Calu3 (cell line): ENCODE measurements at regions of chr22 and their contacts with region 1.

Region 1: DNA sequence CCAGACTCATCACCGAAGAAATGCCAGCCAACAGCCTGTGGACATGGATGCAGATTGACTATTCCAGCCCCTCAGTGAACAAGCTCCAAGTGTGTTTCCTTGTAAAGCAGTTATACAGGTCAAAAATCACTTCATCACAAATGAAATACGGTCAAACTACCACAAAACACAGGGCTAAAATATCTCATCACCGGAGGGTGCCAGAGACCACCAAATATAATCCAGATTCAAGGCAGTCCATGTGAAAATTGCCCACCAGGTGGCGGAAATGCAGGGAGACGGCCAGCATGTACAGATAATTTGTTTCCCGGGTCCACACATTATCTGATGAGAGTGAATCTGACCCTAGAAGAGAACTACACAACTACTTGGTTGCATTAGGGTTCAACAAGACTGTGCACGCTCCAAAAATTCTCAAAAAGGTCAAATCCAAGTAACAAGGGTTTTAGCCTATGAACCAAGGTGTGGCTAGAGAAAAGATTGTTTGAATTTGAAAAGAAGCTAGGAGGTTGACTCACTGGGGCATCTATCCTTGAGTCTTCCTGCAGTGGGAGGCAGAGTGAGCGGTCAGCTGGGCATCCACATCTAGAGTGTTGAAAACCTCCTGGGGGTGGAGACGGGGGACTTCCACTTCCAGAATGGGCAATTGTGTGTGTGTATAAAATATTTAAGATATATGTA is 71.7 kb downstream of the IGLL5 start:
- DNase-seq: peak; percentile 83
- H3K4me3 Mint-ChIP-seq: no peak overlapping the region
- H3K27ac Mint-ChIP-seq: no peak overlapping the region
- H3K4me1 Mint-ChIP-seq: peaks cover 6% of the 10 kb centered on the region
- H3K27me3 Mint-ChIP-seq: peaks cover 57% of the 10 kb centered on the region
- CTCF ChIP-seq: peak; percentile 78

Region 2: DNA sequence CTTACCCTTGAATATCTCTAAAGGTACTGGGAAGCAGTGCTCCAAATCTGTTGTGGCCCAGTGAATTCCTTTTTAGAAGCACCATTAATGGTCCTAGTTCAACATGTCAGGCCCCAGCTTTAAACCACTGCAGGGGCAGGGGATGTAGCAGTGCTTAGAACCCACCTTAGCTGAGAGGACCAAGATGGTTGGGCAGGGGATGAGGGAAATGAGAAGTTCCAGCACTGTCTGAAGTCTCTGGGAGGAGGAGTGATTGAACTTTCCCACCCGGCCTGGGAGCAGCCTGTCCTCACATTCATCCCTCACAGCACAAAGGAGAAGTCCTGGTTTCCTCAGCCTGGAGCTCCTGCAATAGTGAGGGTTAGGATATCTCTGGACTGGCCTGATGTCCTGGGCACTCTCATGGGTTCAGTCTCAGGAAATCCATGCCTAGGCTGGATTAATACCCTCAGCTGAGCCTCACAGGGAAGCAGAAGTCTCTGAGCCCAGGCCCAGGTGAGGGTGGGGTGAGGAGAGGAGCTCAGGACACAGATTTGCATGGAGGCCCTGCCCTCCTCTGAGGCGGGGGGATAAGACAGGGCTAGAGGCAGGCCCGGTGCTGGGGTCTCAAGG is 371.6 kb before region 1 on chr22:
- CTCF ChIA-PET with region 1: no interaction called
- intact Hi-C with region 1: loop called (anchors 5 kb)
- DNase-seq: no peak
- H3K4me3 Mint-ChIP-seq: no peak overlapping the region
- H3K27ac Mint-ChIP-seq: no peak overlapping the region
- H3K4me1 Mint-ChIP-seq: no peaks in the 10 kb centered on the region
- H3K27me3 Mint-ChIP-seq: peaks cover 88% of the 10 kb centered on the region
- CTCF ChIP-seq: no peak

Region 3: DNA sequence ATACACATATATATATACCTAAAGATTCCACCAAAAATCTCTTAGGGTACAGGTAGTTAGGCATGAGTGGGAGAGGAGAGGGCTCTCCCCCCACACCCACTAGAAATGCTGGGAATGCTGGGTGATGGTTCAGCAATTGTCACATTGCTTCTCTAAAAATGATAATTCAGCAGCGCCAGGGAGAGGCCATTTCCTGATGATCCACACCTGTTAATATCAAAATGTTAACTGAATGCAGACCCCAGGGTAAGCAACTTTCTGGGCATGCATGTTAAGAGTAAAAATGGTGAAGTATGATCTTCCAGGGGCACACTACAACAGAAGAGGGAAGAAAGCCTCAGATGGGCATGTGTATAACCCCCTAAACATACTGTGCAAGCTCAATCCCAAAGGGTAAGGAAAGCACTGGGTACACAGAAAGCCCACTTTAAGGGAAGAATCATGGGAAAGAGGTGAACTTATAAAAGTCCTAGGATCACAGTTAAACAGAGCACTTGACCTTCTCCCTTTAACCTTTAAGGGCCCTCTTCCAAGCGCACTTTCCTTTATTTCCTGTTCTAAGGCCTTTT is 43.4 kb after region 1 on chr22:
- CTCF ChIA-PET with region 1: no interaction called
- intact Hi-C with region 1: no loop called
- DNase-seq: no peak
- H3K4me3 Mint-ChIP-seq: no peak overlapping the region
- H3K27ac Mint-ChIP-seq: no peak overlapping the region
- H3K4me1 Mint-ChIP-seq: peaks cover 9% of the 10 kb centered on the region
- H3K27me3 Mint-ChIP-seq: peaks cover 22% of the 10 kb centered on the region
- CTCF ChIP-seq: no peak

Region 4: DNA sequence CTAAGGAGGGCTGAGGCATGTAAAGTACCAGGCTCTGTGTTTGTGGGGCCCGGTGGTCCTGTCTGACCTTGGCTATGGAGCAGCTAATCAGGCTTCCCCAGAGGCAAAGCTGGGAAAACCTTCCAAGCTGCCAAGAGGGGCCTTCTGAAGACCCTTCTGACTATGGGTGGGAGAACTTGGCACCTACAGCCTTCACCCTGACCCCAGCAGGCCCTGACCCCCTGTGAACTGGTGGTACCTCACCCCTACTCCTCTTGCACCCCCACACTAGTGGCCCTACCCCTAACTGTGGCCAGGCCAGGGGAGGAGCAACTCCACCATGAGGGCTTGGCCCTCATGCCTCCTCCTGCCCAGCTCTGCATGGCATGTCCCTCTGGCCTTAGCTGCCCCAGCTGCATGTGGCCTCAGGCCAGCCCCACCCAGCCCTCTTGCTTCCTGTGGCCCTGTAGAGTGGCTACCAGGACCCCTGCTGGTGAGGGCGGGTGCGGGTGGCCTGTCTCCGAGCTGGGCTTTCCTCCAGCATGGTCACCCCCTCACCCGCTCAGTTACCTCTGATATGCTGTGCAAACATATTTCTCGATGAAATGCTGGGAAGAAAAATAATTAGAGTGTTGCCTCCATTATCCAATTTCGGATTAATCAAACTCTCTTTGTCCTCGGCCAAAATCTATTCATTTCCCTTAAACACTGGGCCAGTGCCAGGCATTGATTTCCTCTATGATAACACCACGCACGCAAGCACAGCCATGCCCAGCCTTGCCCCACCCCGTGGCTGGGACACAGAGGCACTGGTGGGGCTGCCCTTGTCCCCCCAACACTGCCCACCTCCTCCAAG is 118.6 kb after region 1 on chr22:
- CTCF ChIA-PET with region 1: interaction called, 14 read pairs
- intact Hi-C with region 1: no loop called
- DNase-seq: peak; percentile 81
- H3K4me3 Mint-ChIP-seq: peak overlapping the region; percentile 47
- H3K27ac Mint-ChIP-seq: peak overlapping the region; percentile 34
- H3K4me1 Mint-ChIP-seq: peaks cover 51% of the 10 kb centered on the region
- H3K27me3 Mint-ChIP-seq: no peaks in the 10 kb centered on the region
- CTCF ChIP-seq: peak; percentile 38

Region 5: GRCh38 chr22:23128269-23129108 is 169.2 kb after region 1 on chr22:
- CTCF ChIA-PET with region 1: interaction called, 82 read pairs
- intact Hi-C with region 1: loop called (anchors 1 kb)
- DNase-seq: peak; percentile 89
- H3K4me3 Mint-ChIP-seq: no peak overlapping the region
- H3K27ac Mint-ChIP-seq: no peak overlapping the region
- H3K4me1 Mint-ChIP-seq: no peaks in the 10 kb centered on the region
- H3K27me3 Mint-ChIP-seq: peaks cover 14% of the 10 kb centered on the region
- CTCF ChIP-seq: peak; percentile 75

Region 6: DNA sequence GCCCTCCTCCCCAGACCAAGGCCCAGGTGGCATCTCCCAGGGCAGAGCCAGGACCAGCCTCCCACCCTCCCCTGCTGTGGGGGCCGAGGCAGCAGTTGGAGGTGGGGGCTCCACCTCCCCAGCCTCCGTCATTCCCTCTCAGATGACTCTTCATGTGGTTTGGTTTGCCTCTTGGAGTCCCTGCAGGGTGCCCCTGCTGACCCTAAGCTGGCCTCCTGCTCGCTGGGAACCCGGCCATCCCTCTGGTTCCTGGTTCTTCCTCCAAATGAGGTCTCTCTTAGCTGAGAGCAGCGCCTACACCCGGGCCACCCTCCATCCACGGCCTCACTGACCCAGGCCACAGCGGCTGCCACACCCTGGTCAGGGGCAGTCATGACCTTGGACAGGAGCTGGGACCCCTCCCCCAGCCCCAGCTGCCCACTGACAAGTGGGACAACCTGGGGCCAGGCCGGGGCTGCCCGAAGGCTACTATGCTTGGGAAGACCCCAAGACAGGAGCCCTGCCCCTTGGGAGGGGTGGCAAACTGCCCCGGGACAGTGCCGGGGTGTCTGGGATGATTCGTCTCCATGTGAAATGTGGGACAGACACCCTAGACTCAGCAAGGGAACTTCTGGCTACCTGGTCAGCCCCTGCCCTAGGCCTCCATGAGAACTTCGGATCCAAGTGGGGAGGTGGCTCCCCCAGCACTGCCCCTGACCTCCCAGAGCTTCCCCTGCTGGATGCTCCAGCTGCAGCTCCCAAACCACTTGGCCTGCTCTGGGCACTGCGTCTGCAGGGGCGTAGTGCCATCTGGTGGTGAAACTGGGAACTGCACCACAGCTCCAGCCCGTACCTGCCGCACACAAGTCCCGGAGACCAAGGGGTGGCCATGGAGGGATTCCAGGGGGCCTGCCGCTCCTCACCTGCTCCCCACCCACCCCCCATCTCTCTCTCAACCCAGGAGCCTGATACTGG is 426.3 kb after region 1 on chr22:
- CTCF ChIA-PET with region 1: interaction called, 16 read pairs
- intact Hi-C with region 1: loop called (anchors 10 kb)
- DNase-seq: peak; percentile 88
- H3K4me3 Mint-ChIP-seq: no peak overlapping the region
- H3K27ac Mint-ChIP-seq: no peak overlapping the region
- H3K4me1 Mint-ChIP-seq: no peaks in the 10 kb centered on the region
- H3K27me3 Mint-ChIP-seq: peaks cover 12% of the 10 kb centered on the region
- CTCF ChIP-seq: peak; percentile 99

Region 7: DNA sequence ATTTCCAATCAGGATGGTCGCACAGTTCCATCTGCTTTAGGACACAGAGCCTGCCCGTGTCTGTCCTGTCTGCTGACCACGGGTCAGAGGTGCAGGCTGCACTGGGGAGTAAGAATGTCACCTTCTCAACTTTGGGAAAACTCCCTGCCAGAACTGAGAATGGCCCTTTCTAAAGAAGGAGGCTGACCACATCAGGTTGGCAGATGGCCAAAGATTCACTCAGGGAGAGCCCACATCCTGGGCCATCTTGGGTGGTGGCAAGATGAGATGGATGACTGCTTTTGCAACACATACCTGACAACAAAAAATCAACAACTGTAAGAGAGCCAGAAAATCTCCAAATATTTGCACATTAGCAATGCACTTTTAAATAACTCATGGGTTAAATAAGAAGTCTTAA is 518.9 kb after region 1 on chr22:
- CTCF ChIA-PET with region 1: no interaction called
- intact Hi-C with region 1: no loop called
- DNase-seq: no peak
- H3K4me3 Mint-ChIP-seq: no peak overlapping the region
- H3K27ac Mint-ChIP-seq: no peak overlapping the region
- H3K4me1 Mint-ChIP-seq: no peaks in the 10 kb centered on the region
- H3K27me3 Mint-ChIP-seq: peaks cover 45% of the 10 kb centered on the region
- CTCF ChIP-seq: no peak